CD4-positive, alpha-beta T cell (primary cell): ENCODE measurements at regions of chr11 and their contacts with region 1.

Region 1: GRCh38 chr11:118791111-118791965 is at the start of gene DDX6:
- DNase-seq: peak; percentile 87 to 95 (median 90)
- ATAC-seq: peak; percentile 61
- H3K4me3 ChIP-seq: peak within 1 kb of the TSS; percentile 94
- H3K4me3 Mint-ChIP-seq: peak within 1 kb of the TSS; percentile 96
- H3K27ac ChIP-seq: peak within 1 kb of the TSS; percentile 94 to 98
- H3K27ac Mint-ChIP-seq: peak within 1 kb of the TSS; percentile 95
- H3K4me1 ChIP-seq: peaks cover 36% of the 10 kb centered on the region
- H3K4me1 Mint-ChIP-seq: peaks cover 26% of the 10 kb centered on the region
- H3K27me3 ChIP-seq: no peaks in the 10 kb centered on the region
- H3K27me3 Mint-ChIP-seq: no peaks in the 10 kb centered on the region
- CTCF ChIP-seq: no peak
- total RNA-seq, gene DDX6: 341 to 355 TPM

Region 2: DNA sequence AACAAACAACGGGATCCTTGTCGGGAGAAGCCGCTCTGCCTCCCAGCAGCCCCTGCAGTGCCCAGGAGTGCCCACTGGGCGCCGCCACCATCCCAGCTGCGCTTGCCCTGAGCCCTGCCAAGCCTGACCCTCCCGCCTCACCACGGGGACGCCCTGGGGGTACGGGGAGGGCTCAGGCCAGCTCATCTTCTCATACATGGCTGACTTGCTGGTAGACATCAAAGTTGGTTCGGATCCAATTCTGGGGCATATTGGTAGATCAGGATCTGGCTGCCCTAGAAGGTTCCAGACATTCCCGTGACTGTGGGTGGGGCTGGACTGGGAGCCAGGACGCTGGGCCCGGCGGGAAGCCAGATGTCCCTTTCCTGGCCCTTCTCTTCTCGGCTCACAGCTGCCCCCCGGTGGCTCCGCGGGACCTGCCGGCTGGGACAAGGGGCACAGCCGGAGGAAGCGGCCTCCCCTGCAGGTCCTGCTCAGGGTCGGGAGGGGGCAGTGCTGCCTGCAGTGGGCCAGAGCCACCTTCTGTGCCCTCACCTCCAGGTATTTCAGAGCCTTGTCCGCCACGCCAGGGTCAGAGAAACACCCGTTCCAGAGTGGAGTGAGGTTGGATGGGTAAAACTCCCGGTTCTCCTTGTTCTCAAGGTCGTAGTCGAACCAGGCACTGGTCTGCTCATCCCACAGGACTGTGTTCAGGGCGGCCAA is 101.3 kb before region 1 on chr11:
- CTCF ChIA-PET with region 1: interaction called, 14 read pairs
- POLR2A ChIA-PET with region 1: interaction called, 25 read pairs
- intact Hi-C with region 1: loop called (anchors 1 to 5 kb)
- DNase-seq: peak; percentile 72 to 92 (median 82)
- ATAC-seq: peak; percentile 88
- H3K4me3 ChIP-seq: peak overlapping the region; percentile 46
- H3K4me3 Mint-ChIP-seq: peak overlapping the region; percentile 77
- H3K27ac ChIP-seq: no peak overlapping the region
- H3K27ac Mint-ChIP-seq: peak overlapping the region; percentile 69
- H3K4me1 ChIP-seq: peaks cover 65% of the 10 kb centered on the region
- H3K4me1 Mint-ChIP-seq: peaks cover 61% of the 10 kb centered on the region
- H3K27me3 ChIP-seq: no peaks in the 10 kb centered on the region
- H3K27me3 Mint-ChIP-seq: no peaks in the 10 kb centered on the region
- CTCF ChIP-seq: peak; percentile 100

Region 3: GRCh38 chr11:118752654-118753053 is 38.7 kb before region 1 on chr11:
- CTCF ChIA-PET with region 1: no interaction called
- POLR2A ChIA-PET with region 1: interaction called, 4 read pairs
- intact Hi-C with region 1: loop called in 1 of 2 experiments (anchors 5 kb)
- DNase-seq: no peak
- ATAC-seq: no peak
- H3K4me3 ChIP-seq: no peak overlapping the region
- H3K4me3 Mint-ChIP-seq: no peak overlapping the region
- H3K27ac ChIP-seq: no peak overlapping the region
- H3K27ac Mint-ChIP-seq: peak overlapping the region; percentile 57
- H3K4me1 ChIP-seq: no peaks in the 10 kb centered on the region
- H3K4me1 Mint-ChIP-seq: peaks cover 13% of the 10 kb centered on the region
- H3K27me3 ChIP-seq: no peaks in the 10 kb centered on the region
- H3K27me3 Mint-ChIP-seq: no peaks in the 10 kb centered on the region
- CTCF ChIP-seq: no peak

Region 4: GRCh38 chr11:118870396-118871345 is 79.3 kb after region 1 on chr11:
- CTCF ChIA-PET with region 1: interaction called, 9 read pairs
- POLR2A ChIA-PET with region 1: interaction called, 245 read pairs
- intact Hi-C with region 1: no loop called
- DNase-seq: peak in 6 of 14 experiments; percentile 14 to 66 (median 53)
- ATAC-seq: peak; percentile 44
- H3K4me3 ChIP-seq: peak overlapping the region; percentile 44
- H3K4me3 Mint-ChIP-seq: peak overlapping the region; percentile 76
- H3K27ac ChIP-seq: peak overlapping the region; percentile 94
- H3K27ac Mint-ChIP-seq: peak overlapping the region; percentile 98
- H3K4me1 ChIP-seq: peaks cover 70% of the 10 kb centered on the region
- H3K4me1 Mint-ChIP-seq: peaks cover 53% of the 10 kb centered on the region
- H3K27me3 ChIP-seq: no peaks in the 10 kb centered on the region
- H3K27me3 Mint-ChIP-seq: no peaks in the 10 kb centered on the region
- CTCF ChIP-seq: no peak

Region 5: GRCh38 chr11:118901494-118902335 is 110.4 kb after region 1 on chr11:
- CTCF ChIA-PET with region 1: interaction called, 3 read pairs
- POLR2A ChIA-PET with region 1: interaction called, 212 read pairs
- intact Hi-C with region 1: no loop called
- DNase-seq: peak in 2 of 14 experiments; percentile 45 to 47
- ATAC-seq: peak; percentile 9
- H3K4me3 ChIP-seq: no peak overlapping the region
- H3K4me3 Mint-ChIP-seq: peak overlapping the region; percentile 51
- H3K27ac ChIP-seq: no peak overlapping the region
- H3K27ac Mint-ChIP-seq: peak overlapping the region; percentile 97
- H3K4me1 ChIP-seq: peaks cover 45% of the 10 kb centered on the region
- H3K4me1 Mint-ChIP-seq: peaks cover 20% of the 10 kb centered on the region
- H3K27me3 ChIP-seq: no peaks in the 10 kb centered on the region
- H3K27me3 Mint-ChIP-seq: no peaks in the 10 kb centered on the region
- CTCF ChIP-seq: no peak

Region 6: GRCh38 chr11:119018074-119018938 is 227.0 kb after region 1 on chr11 and contains the starts of genes RPS25 and TRAPPC4:
- CTCF ChIA-PET with region 1: no interaction called
- POLR2A ChIA-PET with region 1: interaction called, 15 read pairs
- intact Hi-C with region 1: no loop called
- DNase-seq: peak; percentile 92 to 99 (median 94)
- ATAC-seq: peak; percentile 83
- H3K4me3 ChIP-seq: peak within 1 kb of the TSS; percentile 63
- H3K4me3 Mint-ChIP-seq: peak within 1 kb of the TSS; percentile 100
- H3K27ac ChIP-seq: peak within 1 kb of the TSS; percentile 93
- H3K27ac Mint-ChIP-seq: peak within 1 kb of the TSS; percentile 99
- H3K4me1 ChIP-seq: peaks cover 58% of the 10 kb centered on the region
- H3K4me1 Mint-ChIP-seq: peaks cover 62% of the 10 kb centered on the region
- H3K27me3 ChIP-seq: no peaks in the 10 kb centered on the region
- H3K27me3 Mint-ChIP-seq: no peaks in the 10 kb centered on the region
- CTCF ChIP-seq: no peak
- total RNA-seq, gene RPS25: 2,261 to 2,296 TPM
- total RNA-seq, gene TRAPPC4: 101 to 106 TPM

Region 7: GRCh38 chr11:120125020-120125419 is 1333.7 kb after region 1 on chr11:
- CTCF ChIA-PET with region 1: no interaction called
- POLR2A ChIA-PET with region 1: no interaction called
- intact Hi-C with region 1: no loop called
- DNase-seq: no peak
- ATAC-seq: no peak
- H3K4me3 ChIP-seq: no peak overlapping the region
- H3K4me3 Mint-ChIP-seq: no peak overlapping the region
- H3K27ac ChIP-seq: no peak overlapping the region
- H3K27ac Mint-ChIP-seq: no peak overlapping the region
- H3K4me1 ChIP-seq: no peaks in the 10 kb centered on the region
- H3K4me1 Mint-ChIP-seq: peaks cover 5% of the 10 kb centered on the region
- H3K27me3 ChIP-seq: no peaks in the 10 kb centered on the region
- H3K27me3 Mint-ChIP-seq: peaks cover 11% of the 10 kb centered on the region
- CTCF ChIP-seq: no peak